ENCODE measurements at regions of chr1 and their contacts with region 1.

Region 1: DNA sequence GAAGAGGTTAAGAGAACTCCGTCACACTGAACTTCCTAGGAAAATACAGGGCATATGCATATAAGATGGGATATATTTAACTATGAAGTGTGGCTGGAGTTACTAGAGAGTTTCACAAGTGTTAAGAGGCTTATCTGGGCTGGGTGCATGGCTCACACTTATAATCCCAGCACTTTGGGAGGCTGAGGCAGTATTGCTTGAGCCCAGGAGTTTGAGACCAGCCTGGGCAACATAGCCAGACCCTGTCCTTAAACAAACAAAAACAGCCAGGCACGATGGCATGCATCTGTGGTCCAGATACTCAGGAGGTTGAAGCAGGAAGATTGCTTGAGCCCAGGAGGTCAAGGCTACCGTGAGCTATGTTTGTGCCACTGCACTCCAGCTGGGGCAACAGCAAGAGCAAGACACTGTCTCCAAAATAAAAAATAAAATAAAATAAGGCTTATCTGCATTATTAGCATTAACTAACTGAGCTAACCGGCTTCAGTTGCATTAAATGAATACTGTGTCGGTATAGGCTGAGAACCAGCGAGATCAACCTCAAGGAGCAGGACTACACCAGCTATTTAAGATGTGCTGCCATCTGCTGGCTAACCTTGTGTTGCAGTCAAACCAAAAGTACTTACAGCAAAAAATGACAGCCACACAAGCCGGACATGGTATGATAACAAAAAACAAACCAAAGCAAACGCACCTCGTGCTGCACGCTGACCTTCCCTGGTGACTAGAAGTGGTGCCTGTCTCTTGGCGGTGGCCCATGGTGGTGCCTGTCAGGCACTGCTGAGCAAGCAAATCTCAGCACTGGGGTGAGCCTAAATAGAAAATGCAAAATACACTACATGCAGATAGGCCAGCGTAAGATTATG is 19.7 kb upstream of the RBBP5 start:
- DNase-seq: peak; percentile 66
- H3K4me3 ChIP-seq: no peak overlapping the region
- H3K27ac ChIP-seq: no peak overlapping the region
- H3K4me1 ChIP-seq: peaks cover 8% of the 10 kb centered on the region
- H3K27me3 ChIP-seq: no peaks in the 10 kb centered on the region
- CTCF ChIP-seq: peak; percentile 69 to 74

Region 2: DNA sequence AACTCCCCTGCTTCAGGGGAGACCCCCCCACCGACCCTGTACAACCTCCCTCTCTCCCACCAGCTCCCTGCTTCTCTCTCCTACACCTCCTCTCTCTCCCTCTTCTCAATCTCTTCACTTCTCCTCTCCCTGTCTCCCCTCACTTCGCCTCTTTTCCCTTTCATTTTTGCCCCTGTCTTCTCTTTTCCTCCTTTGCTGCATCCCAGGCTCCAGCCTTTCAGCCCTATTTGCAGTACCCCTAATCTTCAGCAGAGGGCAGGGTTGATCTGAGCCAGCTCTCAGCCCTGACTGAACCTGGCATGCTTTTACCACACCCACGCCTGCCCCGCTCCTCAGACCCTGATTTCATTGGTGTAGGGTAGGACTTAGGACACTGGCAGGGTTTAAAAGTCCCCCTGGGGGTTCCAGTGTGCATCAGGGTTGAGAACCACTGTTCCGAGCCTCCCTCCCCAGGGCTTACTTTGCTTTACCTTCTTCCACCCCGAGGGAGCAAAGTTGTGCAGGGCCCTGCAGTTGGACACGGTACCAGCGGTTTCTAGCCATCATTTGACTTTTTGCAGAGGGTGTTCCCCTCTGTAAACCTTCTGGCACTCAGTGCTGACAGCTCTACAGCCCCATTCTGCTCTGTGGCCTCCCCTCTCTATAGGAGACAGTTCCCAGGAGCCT is 165.8 kb before region 1 on chr1:
- CTCF ChIA-PET with region 1: no interaction called
- dilution Hi-C with region 1: no loop called
- in situ Hi-C with region 1: loop called in 1 of 2 experiments (anchors 25 kb)
- intact Hi-C with region 1: loop called (anchors 1 kb)
- DNase-seq: peak; percentile 7
- H3K4me3 ChIP-seq: no peak overlapping the region
- H3K27ac ChIP-seq: no peak overlapping the region
- H3K4me1 ChIP-seq: peaks cover 6% of the 10 kb centered on the region
- H3K27me3 ChIP-seq: no peaks in the 10 kb centered on the region
- CTCF ChIP-seq: peak; percentile 73 to 85

Region 3: DNA sequence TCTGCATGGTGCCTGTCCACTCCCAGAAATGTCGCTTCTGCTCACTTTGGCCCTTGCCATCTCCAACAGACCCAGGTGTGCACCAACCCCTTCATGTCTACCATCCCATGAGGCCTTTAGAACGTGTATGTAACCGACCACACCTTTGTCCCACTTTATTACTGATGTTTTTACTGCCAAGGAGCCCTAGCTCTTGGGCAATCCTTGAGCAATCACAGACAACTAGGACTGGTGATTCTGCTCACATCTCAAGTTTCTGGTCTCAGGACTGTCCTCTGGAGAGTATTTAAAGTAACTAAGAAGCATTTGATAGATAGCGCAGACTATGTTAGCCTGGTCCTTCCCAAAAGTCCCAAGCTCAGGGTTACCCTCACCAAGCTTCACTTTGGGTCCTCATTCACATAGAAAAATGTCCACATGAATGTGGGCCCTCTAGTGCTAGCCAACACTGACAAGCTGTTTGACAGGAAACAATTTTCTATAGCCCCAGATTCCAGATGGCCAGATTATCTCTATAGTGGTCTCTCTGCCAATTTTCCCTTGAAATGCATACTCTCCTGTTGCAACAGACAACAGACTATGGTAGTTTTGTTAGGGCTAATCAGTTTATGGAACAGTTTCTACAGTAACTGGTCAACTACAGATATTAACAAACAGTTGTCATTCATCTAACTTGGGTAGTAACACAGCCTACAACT is 50.3 kb before region 1 on chr1:
- CTCF ChIA-PET with region 1: no interaction called
- dilution Hi-C with region 1: no loop called
- in situ Hi-C with region 1: no loop called
- intact Hi-C with region 1: no loop called
- DNase-seq: no peak
- H3K4me3 ChIP-seq: no peak overlapping the region
- H3K27ac ChIP-seq: no peak overlapping the region
- H3K4me1 ChIP-seq: no peaks in the 10 kb centered on the region
- H3K27me3 ChIP-seq: no peaks in the 10 kb centered on the region
- CTCF ChIP-seq: no peak

Region 4: DNA sequence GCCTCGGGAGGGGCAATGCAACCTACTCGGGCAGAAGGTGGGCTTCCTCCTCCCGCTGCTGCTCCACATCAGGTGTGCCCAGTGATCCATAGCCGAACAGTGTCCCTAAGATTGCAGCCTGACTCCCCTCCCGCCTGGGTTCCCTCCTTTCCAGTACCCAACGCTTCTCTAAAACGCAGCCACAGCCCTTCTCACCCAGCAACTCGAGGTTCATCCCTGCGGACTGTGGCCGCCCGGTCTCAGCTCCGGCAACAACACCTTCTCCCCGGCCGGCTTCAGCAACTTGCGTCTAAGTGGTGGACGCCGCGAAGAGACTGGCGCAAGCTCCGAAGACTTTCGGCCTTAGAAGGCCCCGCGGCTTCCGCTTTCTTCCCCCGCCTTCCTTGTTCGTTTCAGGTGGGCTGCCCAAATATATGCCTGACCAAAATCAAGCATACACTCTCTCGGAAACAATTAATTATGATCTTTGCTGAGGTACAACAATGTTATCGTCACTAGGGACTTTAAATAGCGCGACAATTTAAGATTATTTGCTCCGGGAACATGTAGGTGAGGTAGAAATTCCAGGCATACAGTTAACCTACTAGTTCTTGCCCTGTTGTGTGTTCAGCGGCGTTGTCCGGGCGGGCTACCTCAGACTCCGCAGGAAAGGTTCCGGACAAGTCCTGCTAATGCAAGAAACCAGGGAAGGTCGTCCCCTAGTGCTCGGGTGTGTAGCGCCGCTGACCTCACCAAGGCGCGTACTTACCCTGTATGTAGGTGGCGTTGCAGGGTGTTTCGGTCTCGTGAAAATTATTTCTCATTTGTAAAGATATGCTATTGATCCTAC is 19.6 kb before region 1 on chr1 and contains the start of gene RBBP5:
- CTCF ChIA-PET with region 1: no interaction called
- dilution Hi-C with region 1: no loop called
- in situ Hi-C with region 1: no loop called
- intact Hi-C with region 1: loop called (anchors 1 kb)
- DNase-seq: peak; percentile 93
- H3K4me3 ChIP-seq: peak within 1 kb of the TSS; percentile 68 to 96 (median 85)
- H3K27ac ChIP-seq: peak within 1 kb of the TSS; percentile 99
- H3K4me1 ChIP-seq: peaks cover 12% of the 10 kb centered on the region
- H3K27me3 ChIP-seq: no peaks in the 10 kb centered on the region
- CTCF ChIP-seq: peak; percentile 67 to 85
- total RNA-seq, gene RBBP5: 15.2 to 17.5 TPM

Region 5: GRCh38 chr1:205375835-205376545 is 234.5 kb after region 1 on chr1:
- CTCF ChIA-PET with region 1: no interaction called
- dilution Hi-C with region 1: no loop called
- in situ Hi-C with region 1: no loop called
- intact Hi-C with region 1: no loop called
- DNase-seq: peak; percentile 62
- H3K4me3 ChIP-seq: no peak overlapping the region
- H3K27ac ChIP-seq: no peak overlapping the region
- H3K4me1 ChIP-seq: peaks cover 32% of the 10 kb centered on the region
- H3K27me3 ChIP-seq: no peaks in the 10 kb centered on the region
- CTCF ChIP-seq: peak in 1 of 2 donors; percentile 5